ENCODE measurements at regions of chr9 and their contacts with region 1.

Region 1: GRCh38 chr9:11973011-11973410 is 720.2 kb upstream of the TYRP1 start:
- DNase-seq: no peak
- H3K4me3 ChIP-seq: no peak overlapping the region
- H3K27ac ChIP-seq: no peak overlapping the region
- H3K4me1 ChIP-seq: no peaks in the 10 kb centered on the region
- H3K27me3 ChIP-seq: no peaks in the 10 kb centered on the region
- CTCF ChIP-seq: no peak

Region 2: DNA sequence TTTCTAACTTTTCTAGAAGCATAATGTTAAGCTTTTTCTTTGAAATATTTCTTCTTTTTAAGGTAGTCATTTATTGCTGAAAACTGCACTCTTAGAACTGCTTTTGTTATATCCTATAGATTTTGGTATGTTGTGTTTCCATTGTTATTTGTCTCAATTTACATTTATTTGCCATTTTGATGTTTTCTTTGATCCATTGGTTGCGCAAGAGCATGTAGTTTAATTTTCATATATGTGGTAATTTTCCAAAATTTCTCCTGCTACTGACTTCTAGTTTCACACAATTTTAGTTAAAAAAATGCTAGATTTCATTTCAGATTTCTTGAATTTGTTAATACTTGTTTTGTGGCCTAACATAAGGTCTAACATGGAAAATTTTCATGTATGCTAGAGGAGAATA is 309.1 kb before region 1 on chr9:
- CTCF ChIA-PET with region 1: no interaction called
- POLR2A ChIA-PET with region 1: no interaction called
- intact Hi-C with region 1: no loop called
- DNase-seq: no peak
- H3K4me3 ChIP-seq: no peak overlapping the region
- H3K27ac ChIP-seq: no peak overlapping the region
- H3K4me1 ChIP-seq: no peaks in the 10 kb centered on the region
- H3K27me3 ChIP-seq: no peaks in the 10 kb centered on the region
- CTCF ChIP-seq: no peak

Region 3: GRCh38 chr9:12391839-12392509 is 419.0 kb after region 1 on chr9:
- CTCF ChIA-PET with region 1: interaction called, 10 read pairs
- POLR2A ChIA-PET with region 1: no interaction called
- intact Hi-C with region 1: no loop called
- DNase-seq: no peak
- H3K4me3 ChIP-seq: no peak overlapping the region
- H3K27ac ChIP-seq: no peak overlapping the region
- H3K4me1 ChIP-seq: no peaks in the 10 kb centered on the region
- H3K27me3 ChIP-seq: no peaks in the 10 kb centered on the region
- CTCF ChIP-seq: no peak